A549 (cell line): ENCODE measurements at regions of chr17 and their contacts with region 1.

Region 1: DNA sequence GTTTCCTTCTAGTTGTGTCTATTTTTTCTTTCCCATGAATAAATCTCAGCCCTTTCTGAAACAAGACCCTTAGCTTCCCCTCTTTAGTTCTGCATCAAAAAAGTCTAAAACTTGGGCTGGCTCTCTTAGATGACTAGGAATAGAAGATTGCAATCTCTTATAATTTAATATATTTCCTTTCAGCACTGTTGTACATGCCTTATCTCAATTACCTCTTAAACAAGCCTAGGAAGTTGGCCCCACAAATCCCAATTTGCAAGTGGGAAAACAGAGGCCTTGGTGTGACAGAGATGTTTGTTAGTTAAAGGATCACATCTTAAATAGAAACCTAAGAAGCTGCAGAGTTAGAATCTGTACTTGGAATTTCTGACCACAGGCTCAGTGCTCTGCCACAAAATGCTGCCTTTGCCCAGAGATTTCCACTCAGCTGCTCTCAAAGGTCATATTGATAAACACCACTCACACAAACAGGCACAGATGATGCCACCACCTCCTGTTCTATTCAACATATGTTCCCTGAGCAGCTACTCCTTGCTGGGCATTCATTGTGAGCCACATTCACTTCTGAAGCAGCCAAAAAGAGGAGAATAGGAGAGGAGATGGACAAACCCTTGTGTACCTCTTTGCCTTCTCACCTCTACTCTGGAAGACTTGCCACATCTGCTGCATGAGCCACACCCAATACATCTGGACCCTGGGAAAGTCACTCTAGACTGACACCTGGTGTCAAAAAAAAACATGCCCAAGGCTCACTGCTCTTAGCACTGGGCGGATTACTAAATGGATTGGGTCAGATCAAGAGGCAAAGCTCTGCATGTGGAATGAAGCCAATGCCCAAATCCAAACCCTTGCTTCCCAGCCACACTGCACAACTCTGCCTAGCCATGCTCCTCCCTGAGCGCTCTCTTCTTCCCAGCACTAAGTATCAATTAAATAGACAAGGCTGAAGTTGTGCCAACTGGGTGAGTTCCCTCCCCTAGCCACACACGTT is 5.4 kb downstream of the CCDC182 start:
- DNase-seq: peak; percentile 53 to 54
- ATAC-seq: peak; percentile 82 to 91
- H3K4me3 ChIP-seq: no peak overlapping the region
- H3K27ac ChIP-seq: no peak overlapping the region
- H3K4me1 ChIP-seq: peaks cover 6% of the 10 kb centered on the region; the same call in 1 of the 3 replicates
- CTCF ChIP-seq: peak; percentile 63
- EP300 ChIP-seq: no peak
- POLR2A ChIP-seq: no peak
- RAD21 ChIP-seq: peak; percentile 61 to 65

Region 2: GRCh38 chr17:57121338-57122042 is 618.2 kb before region 1 on chr17:
- CTCF ChIA-PET with region 1: interaction called, 51 read pairs
- POLR2A ChIA-PET with region 1: no interaction called
- DNase-seq: peak; percentile 56 to 77
- ATAC-seq: peak; percentile 82 to 89
- H3K4me3 ChIP-seq: no peak overlapping the region
- H3K27ac ChIP-seq: no peak overlapping the region
- H3K4me1 ChIP-seq: 0 out of 3 replicates have a peak, but pooled peaks cover 4% of the 10 kb centered on the region
- CTCF ChIP-seq: peak; percentile 63
- EP300 ChIP-seq: no peak
- POLR2A ChIP-seq: no peak
- RAD21 ChIP-seq: peak; percentile 54 to 57

Region 3: DNA sequence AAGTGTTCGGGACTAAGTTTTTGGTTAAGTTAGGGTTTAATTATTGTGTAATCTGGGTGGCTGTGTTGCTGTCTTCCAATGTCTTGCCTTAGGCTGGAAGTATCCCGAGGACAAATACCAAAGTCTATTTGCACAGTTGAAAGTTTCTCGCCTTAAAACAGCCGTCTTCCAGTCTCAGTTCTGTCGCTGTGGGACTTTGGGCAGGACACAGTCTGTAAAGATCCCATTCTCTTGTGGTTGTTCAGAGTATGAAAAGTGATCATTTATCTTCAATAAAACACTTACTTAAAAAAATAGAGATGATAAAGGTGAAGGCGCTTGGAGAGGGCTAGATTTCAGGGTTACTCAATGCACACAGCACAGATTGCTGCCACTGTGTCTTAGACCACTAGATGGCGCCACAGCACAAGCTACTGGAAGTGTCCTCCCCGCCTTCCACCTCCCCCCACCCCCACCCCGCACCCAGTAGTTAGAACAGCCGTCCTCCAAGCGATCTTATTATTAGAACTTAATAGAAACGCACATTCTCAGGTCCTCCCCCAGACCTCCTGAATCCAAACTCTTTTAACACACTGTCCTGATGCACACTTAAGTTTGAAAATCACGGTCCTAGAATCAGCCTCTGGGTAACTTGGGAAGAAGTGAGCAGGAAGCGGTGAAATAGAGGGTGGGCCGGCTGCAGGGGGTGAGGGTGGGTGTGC is 608.8 kb before region 1 on chr17:
- CTCF ChIA-PET with region 1: interaction called, 51 read pairs
- POLR2A ChIA-PET with region 1: no interaction called
- DNase-seq: peak; percentile 82 to 99
- ATAC-seq: peak; percentile 95 to 96
- H3K4me3 ChIP-seq: peak overlapping the region; percentile 38
- H3K27ac ChIP-seq: peak overlapping the region; percentile 66 to 84
- H3K4me1 ChIP-seq: no peaks in the 10 kb centered on the region
- CTCF ChIP-seq: peak; percentile 99
- EP300 ChIP-seq: no peak
- POLR2A ChIP-seq: no peak
- RAD21 ChIP-seq: peak; percentile 92 to 100

Region 4: GRCh38 chr17:57724026-57724728 is 15.5 kb before region 1 on chr17:
- CTCF ChIA-PET with region 1: interaction called, 13 read pairs
- POLR2A ChIA-PET with region 1: no interaction called
- DNase-seq: no peak
- ATAC-seq: no peak; a peak in 1 of 6 replicates
- H3K4me3 ChIP-seq: no peak overlapping the region
- H3K27ac ChIP-seq: no peak overlapping the region
- H3K4me1 ChIP-seq: no peaks in the 10 kb centered on the region
- CTCF ChIP-seq: no peak
- EP300 ChIP-seq: no peak
- POLR2A ChIP-seq: no peak
- RAD21 ChIP-seq: no peak

Region 5: GRCh38 chr17:57975044-57975443 is 235.3 kb after region 1 on chr17:
- CTCF ChIA-PET with region 1: no interaction called
- POLR2A ChIA-PET with region 1: no interaction called
- DNase-seq: peak; percentile 53 to 81
- ATAC-seq: peak; percentile 80 to 87
- H3K4me3 ChIP-seq: 0 out of 3 replicates have a peak overlapping the region, but pooled peaks have one; percentile 1
- H3K27ac ChIP-seq: peak overlapping the region; percentile 68 to 76
- H3K4me1 ChIP-seq: peaks cover 60% of the 10 kb centered on the region
- CTCF ChIP-seq: no peak
- EP300 ChIP-seq: peak; percentile 34 to 77; a peak in 3 of 5 replicates
- POLR2A ChIP-seq: no peak
- RAD21 ChIP-seq: no peak; a peak in 2 of 5 replicates